Adrenal gland (tissue), 19 donors: ENCODE measurements at regions of chr22 and their contacts with region 1.

Region 1: DNA sequence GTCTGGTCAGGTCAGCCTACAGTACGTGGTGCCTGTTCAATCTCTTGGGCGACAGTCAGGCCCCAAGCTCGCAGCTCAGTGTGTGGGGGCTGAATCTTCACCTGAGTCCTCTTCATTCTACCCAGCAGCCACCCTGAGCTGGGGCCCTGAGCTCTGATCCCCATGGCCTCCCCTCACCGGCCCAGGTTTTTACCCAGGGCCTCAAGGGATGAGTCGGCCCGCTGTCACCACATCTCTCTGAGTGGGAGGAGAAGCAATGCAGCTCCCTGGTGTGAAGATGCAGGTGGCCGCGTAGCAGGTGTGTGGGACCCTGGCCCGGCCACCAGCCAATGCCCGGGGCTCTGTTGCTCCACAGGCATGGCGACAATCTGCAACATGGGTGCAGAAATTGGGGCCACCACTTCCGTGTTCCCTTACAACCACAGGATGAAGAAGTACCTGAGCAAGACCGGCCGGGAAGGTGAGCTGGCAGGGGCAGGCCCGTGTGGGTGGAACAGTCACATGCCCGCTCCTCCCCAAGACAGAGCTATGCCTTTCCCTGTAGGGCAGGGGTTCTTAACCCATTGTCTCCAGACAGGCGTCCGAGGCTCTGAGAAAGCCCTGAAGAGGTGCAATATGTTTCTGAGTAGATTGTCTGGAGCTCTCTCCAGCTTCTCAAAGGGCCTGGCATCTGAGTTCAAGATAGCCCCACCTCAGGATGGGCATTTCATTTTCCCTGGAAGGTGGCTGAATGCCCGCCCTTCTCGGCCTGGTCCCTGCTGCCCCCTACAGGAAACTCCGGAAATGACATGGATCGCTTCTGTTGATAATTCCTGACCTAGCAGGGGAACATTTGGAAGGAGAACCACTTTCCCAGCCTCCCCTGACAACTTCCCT is 26.9 kb downstream of the POLR3H start:
- DNase-seq: peak; percentile 67 to 92 (median 82)
- H3K4me3 ChIP-seq: no peak overlapping the region
- H3K27ac ChIP-seq: peak overlapping the region in 2 of 5 donors; percentile 26 to 44
- H3K4me1 ChIP-seq: peaks cover 7 to 20% of the 10 kb centered on the region in 2 donors
- H3K27me3 ChIP-seq: no peaks in the 10 kb centered on the region
- CTCF ChIP-seq: peak; percentile 88 to 94 (median 92)
- POLR2A ChIP-seq: no peak

Region 2: DNA sequence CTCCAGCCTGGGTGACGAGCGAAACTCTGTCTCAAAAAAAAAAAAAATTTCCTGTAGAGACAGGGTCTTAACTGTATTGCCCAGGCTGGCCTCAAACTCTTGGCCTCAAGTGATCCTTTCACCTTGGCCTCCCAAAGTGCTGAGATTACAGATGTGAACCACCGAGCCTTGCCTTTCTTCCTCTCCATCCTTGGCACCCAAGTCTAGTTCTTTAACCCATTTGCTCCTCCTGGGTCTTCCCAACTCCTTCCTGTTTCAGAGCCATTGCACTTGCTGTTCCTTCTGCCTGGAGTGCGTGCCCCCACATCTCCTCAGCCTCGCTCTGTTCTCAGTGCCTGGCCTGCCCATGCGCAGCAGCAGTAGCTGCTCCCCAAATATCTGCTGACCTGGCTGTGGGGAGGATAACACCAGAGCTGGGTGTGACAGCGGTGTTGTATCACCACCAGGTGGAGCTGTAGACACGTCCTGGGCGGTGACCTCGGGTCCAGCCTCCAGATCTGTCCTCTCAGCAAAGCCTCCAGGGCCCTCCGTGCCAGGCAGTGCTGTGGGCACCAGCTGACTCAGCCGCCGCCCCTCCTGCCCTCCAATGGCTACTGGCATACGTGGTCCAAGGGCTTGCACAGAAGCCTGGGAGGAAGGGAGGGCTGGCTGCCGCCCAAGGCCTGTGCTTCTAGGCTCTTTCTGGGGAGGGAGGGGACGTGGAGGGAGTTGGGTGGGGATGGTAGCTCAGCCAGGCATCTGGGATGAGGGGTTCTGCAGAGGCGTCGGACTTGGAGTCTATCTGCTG is 113.7 kb before region 1 on chr22:
- intact Hi-C with region 1: loop called in 1 of 2 experiments (anchors 5 kb)
- DNase-seq: peak; percentile 95 to 98 (median 98)
- H3K4me3 ChIP-seq: no peak overlapping the region
- H3K27ac ChIP-seq: peak overlapping the region in 2 of 5 donors; percentile 6 to 57
- H3K4me1 ChIP-seq: peaks cover 8 to 19% of the 10 kb centered on the region in 2 donors
- H3K27me3 ChIP-seq: no peaks in the 10 kb centered on the region
- CTCF ChIP-seq: peak; percentile 93 to 99 (median 98)
- POLR2A ChIP-seq: no peak

Region 3: GRCh38 chr22:41468381-41469217 is 48.8 kb before region 1 on chr22 and contains the starts of genes ACO2 and PHF5A:
- intact Hi-C with region 1: loop called in 1 of 2 experiments (anchors 10 kb)
- DNase-seq: peak; percentile 97 to 99 (median 97)
- H3K4me3 ChIP-seq: peak within 1 kb of the TSS; percentile 78 to 100 (median 84)
- H3K27ac ChIP-seq: peak within 1 kb of the TSS; percentile 37 to 97 (median 93)
- H3K4me1 ChIP-seq: peaks cover 13 to 53% of the 10 kb centered on the region in 2 donors
- H3K27me3 ChIP-seq: no peaks in the 10 kb centered on the region
- CTCF ChIP-seq: peak in 1 of 6 experiments; percentile 1
- POLR2A ChIP-seq: peak; percentile 5 to 77
- total RNA-seq, gene ACO2: 104 to 212 (median 146) TPM
- total RNA-seq, gene PHF5A: 18.2 to 49.0 (median 27.8) TPM